PC-9 (cell line): ENCODE measurements at regions of chr13 and their contacts with region 1.

Region 1: GRCh38 chr13:87274209-87274819 is 396.9 kb upstream of the SLITRK5 start:
- DNase-seq: peak; percentile 32 to 37
- H3K4me3 ChIP-seq: no peak overlapping the region
- H3K27ac ChIP-seq: no peak overlapping the region
- H3K4me1 ChIP-seq: no peaks in the 10 kb centered on the region
- H3K27me3 ChIP-seq: no peaks in the 10 kb centered on the region
- CTCF ChIP-seq: peak; percentile 88

Region 2: GRCh38 chr13:85970727-85971126 is 1303.6 kb before region 1 on chr13:
- CTCF ChIA-PET with region 1: no interaction called
- POLR2A ChIA-PET with region 1: no interaction called
- intact Hi-C with region 1: loop called (anchors 10 kb)
- DNase-seq: no peak
- H3K4me3 ChIP-seq: no peak overlapping the region
- H3K27ac ChIP-seq: no peak overlapping the region
- H3K4me1 ChIP-seq: no peaks in the 10 kb centered on the region
- H3K27me3 ChIP-seq: no peaks in the 10 kb centered on the region
- CTCF ChIP-seq: peak; percentile 35; the same call in 1 of the 2 replicates

Region 3: DNA sequence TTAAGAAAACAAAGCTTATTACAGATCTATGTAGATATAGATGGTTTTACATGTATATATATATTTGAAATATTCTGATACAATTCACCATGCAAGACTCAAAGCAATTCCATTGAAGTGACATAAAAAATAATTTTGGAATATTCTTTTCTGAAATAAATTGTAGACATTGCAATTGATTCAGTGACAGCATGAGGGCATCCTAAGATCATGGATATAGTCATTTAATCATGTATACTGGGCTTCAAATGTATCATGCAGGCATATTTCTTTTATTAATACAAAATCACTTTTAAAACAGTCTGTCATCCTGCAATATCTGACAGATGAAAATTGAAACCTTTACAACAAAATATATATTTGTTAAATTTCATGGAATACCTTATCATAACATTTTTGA is 1188.4 kb before region 1 on chr13:
- CTCF ChIA-PET with region 1: no interaction called
- POLR2A ChIA-PET with region 1: no interaction called
- intact Hi-C with region 1: loop called (anchors 10 kb)
- DNase-seq: no peak
- H3K4me3 ChIP-seq: no peak overlapping the region
- H3K27ac ChIP-seq: no peak overlapping the region
- H3K4me1 ChIP-seq: no peaks in the 10 kb centered on the region
- H3K27me3 ChIP-seq: no peaks in the 10 kb centered on the region
- CTCF ChIP-seq: 0 out of 2 replicates have a peak, but pooled peaks have one; percentile 33

Region 4: GRCh38 chr13:86870444-86870843 is 403.9 kb before region 1 on chr13:
- CTCF ChIA-PET with region 1: interaction called, 6 read pairs
- POLR2A ChIA-PET with region 1: no interaction called
- intact Hi-C with region 1: loop called (anchors 1 kb)
- DNase-seq: no peak
- H3K4me3 ChIP-seq: no peak overlapping the region
- H3K27ac ChIP-seq: no peak overlapping the region
- H3K4me1 ChIP-seq: no peaks in the 10 kb centered on the region
- H3K27me3 ChIP-seq: no peaks in the 10 kb centered on the region
- CTCF ChIP-seq: peak; percentile 83

Region 5: DNA sequence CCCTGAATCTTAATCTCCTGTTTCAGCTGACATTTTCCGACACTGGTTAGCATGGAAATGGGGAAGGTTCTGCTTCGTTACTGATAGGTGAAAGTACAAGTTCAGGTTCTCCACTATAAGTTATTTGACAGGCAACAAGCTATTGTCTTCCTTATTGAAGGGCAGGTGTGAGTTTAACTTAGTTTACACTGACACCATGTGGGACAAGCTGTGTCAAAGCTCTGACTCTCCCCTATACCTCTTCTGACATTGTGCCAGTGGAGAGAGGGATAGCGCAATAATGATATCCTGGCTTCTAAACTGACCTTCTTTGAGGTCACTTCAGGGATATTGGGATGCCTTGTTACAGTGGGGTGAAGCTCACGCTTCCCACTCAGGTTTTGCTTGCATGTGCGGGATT is 190.1 kb before region 1 on chr13:
- CTCF ChIA-PET with region 1: no interaction called
- POLR2A ChIA-PET with region 1: no interaction called
- intact Hi-C with region 1: no loop called
- DNase-seq: no peak
- H3K4me3 ChIP-seq: no peak overlapping the region
- H3K27ac ChIP-seq: no peak overlapping the region
- H3K4me1 ChIP-seq: no peaks in the 10 kb centered on the region
- H3K27me3 ChIP-seq: no peaks in the 10 kb centered on the region
- CTCF ChIP-seq: no peak

Region 6: GRCh38 chr13:87376081-87376480 is 101.8 kb after region 1 on chr13:
- CTCF ChIA-PET with region 1: no interaction called
- POLR2A ChIA-PET with region 1: no interaction called
- intact Hi-C with region 1: no loop called
- DNase-seq: peak in 1 of 2 experiments; percentile 37
- H3K4me3 ChIP-seq: no peak overlapping the region
- H3K27ac ChIP-seq: no peak overlapping the region
- H3K4me1 ChIP-seq: no peaks in the 10 kb centered on the region
- H3K27me3 ChIP-seq: no peaks in the 10 kb centered on the region
- CTCF ChIP-seq: no peak